Activated B cell treated with CpG ODN at 0.5 μM for 24 hours (primary cell): ENCODE measurements at regions of chr5 and their contacts with region 1.

Region 1: DNA sequence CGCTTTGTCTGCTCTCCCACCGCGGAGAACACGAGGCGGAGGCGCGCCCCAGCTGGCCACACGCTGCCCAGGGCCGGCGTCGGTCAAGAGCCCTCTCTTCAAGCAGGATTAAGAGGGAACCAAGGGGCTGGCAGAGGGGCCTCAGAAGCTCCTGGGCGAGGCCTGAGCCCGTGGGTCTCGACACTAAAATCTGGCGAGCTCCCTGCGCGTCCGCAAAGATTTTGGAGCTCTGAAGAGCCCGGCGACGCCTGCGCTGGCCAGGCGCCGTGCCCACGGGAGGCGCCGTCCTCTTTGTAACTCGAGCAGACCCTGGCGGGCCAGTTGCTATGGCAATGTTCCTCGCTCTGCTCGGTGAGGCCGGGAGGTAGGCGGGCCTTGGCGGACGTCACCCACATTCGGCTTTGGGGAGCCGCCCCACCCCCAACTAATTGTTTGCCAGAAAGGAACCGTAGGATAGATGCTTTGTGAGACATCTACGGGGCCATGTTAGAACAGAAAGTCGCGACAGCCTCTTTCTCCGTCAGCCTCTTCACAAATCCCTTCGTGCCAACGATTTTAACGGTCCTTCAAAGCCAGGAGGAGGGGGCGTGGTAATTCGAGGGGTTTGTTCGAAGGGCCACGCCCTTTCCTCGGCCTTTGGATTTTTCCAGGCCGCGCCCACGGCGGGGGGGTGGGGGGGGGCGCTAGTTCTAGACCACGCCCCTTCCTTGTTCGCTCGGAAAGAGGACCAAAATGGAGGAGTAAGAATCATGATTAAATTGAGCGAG is 714 bp upstream of the CNOT8 start:
- DNase-seq: peak; percentile 75
- ATAC-seq: peak; percentile 49
- H3K4me3 Mint-ChIP-seq: peak overlapping the region; percentile 91
- H3K27ac Mint-ChIP-seq: peak overlapping the region; percentile 97
- H3K4me1 Mint-ChIP-seq: peaks cover 42% of the 10 kb centered on the region
- H3K27me3 Mint-ChIP-seq: no peaks in the 10 kb centered on the region
- CTCF ChIP-seq: no peak

Region 2: DNA sequence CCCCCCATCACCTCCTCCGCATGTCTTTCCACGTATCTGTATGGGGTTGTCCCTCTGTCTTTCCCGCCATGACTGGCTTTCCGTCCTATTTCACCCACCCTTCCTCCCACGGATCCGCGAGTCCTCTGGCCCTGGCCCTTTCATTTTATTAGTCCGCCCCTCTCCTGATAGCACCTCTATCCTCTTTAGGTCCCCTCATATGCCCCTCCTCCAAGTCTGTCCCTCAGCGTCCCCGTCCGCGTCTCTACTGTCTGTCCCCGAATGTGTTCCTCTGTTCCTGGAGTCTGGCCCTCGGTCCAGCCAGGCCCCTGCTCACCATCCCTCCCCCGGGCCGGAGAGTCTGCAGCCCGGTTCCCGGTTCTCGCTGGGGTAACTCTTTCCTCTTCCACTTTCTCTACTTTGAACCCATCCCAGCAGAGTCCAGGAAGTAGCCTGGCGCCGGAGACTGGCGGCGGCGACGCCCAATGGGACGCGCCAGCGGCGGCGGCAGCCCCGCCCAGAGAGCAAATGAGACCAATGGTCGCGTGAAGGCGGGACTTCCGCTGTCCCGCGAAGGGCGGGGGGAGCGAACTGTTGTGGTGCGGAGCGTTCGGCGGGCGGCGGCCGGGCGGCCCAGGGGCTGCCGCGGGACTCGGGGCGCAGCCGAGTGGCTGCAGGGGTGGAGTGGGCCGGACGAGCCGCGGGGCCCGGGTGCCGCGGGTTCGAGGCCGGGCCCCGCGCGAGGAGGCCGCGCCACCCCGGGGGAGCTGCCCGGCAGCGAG is 412.1 kb before region 1 on chr5 and contains the start of gene SAP30L:
- CTCF ChIA-PET with region 1: no interaction called
- POLR2A ChIA-PET with region 1: no interaction called
- intact Hi-C with region 1: loop called (anchors 1 kb)
- DNase-seq: peak; percentile 97
- ATAC-seq: peak; percentile 96
- H3K4me3 Mint-ChIP-seq: peak within 1 kb of the TSS; percentile 99
- H3K27ac Mint-ChIP-seq: peak within 1 kb of the TSS; percentile 90
- H3K4me1 Mint-ChIP-seq: peaks cover 47% of the 10 kb centered on the region
- H3K27me3 Mint-ChIP-seq: no peaks in the 10 kb centered on the region
- CTCF ChIP-seq: no peak
- total RNA-seq, gene SAP30L: 26.4 and 28.9 TPM in 2 replicates

Region 3: GRCh38 chr5:154683101-154683880 is 174.4 kb before region 1 on chr5:
- CTCF ChIA-PET with region 1: no interaction called
- POLR2A ChIA-PET with region 1: interaction called, 3 read pairs
- intact Hi-C with region 1: loop called (anchors 1 kb)
- DNase-seq: no peak
- ATAC-seq: peak; percentile 32
- H3K4me3 Mint-ChIP-seq: peak overlapping the region; percentile 80
- H3K27ac Mint-ChIP-seq: no peak overlapping the region
- H3K4me1 Mint-ChIP-seq: peaks cover 6% of the 10 kb centered on the region
- H3K27me3 Mint-ChIP-seq: peaks cover 4% of the 10 kb centered on the region
- CTCF ChIP-seq: no peak

Region 4: GRCh38 chr5:154940772-154941620 is 83.3 kb after region 1 on chr5 and contains the start of gene MRPL22:
- CTCF ChIA-PET with region 1: no interaction called
- POLR2A ChIA-PET with region 1: interaction called, 18 read pairs
- intact Hi-C with region 1: loop called (anchors 1 kb)
- DNase-seq: peak; percentile 88
- ATAC-seq: peak; percentile 63
- H3K4me3 Mint-ChIP-seq: peak within 1 kb of the TSS; percentile 99
- H3K27ac Mint-ChIP-seq: peak within 1 kb of the TSS; percentile 97
- H3K4me1 Mint-ChIP-seq: peaks cover 49% of the 10 kb centered on the region
- H3K27me3 Mint-ChIP-seq: no peaks in the 10 kb centered on the region
- CTCF ChIP-seq: no peak
- total RNA-seq, gene MRPL22: 41.9 and 42.6 TPM in 2 replicates

Region 5: GRCh38 chr5:155676967-155677366 is 819.3 kb after region 1 on chr5:
- CTCF ChIA-PET with region 1: no interaction called
- POLR2A ChIA-PET with region 1: no interaction called
- intact Hi-C with region 1: no loop called
- DNase-seq: no peak
- ATAC-seq: no peak
- H3K4me3 Mint-ChIP-seq: no peak overlapping the region
- H3K27ac Mint-ChIP-seq: no peak overlapping the region
- H3K4me1 Mint-ChIP-seq: no peaks in the 10 kb centered on the region
- H3K27me3 Mint-ChIP-seq: no peaks in the 10 kb centered on the region
- CTCF ChIP-seq: no peak

Region 6: GRCh38 chr5:156496291-156496690 is 1638.6 kb after region 1 on chr5:
- CTCF ChIA-PET with region 1: no interaction called
- POLR2A ChIA-PET with region 1: no interaction called
- intact Hi-C with region 1: no loop called
- DNase-seq: no peak
- ATAC-seq: no peak
- H3K4me3 Mint-ChIP-seq: no peak overlapping the region
- H3K27ac Mint-ChIP-seq: no peak overlapping the region
- H3K4me1 Mint-ChIP-seq: no peaks in the 10 kb centered on the region
- H3K27me3 Mint-ChIP-seq: no peaks in the 10 kb centered on the region
- CTCF ChIP-seq: no peak